Activated T-helper 1 cell treated with anti-CD3 and anti-CD28 coated beads, Interleukin-12 subunit alpha, Interleukin-12 subunit beta, Interleukin-2, Interleukin-4 antibody, amounts not matched to agents 30 ng/mL and 10 ng/mL and 1 ng/mL, durations not matched to agents 14 hours and 24 hours and 36 hours (primary cell): ENCODE measurements at regions of chr5 and their contacts with region 1.

Region 1: DNA sequence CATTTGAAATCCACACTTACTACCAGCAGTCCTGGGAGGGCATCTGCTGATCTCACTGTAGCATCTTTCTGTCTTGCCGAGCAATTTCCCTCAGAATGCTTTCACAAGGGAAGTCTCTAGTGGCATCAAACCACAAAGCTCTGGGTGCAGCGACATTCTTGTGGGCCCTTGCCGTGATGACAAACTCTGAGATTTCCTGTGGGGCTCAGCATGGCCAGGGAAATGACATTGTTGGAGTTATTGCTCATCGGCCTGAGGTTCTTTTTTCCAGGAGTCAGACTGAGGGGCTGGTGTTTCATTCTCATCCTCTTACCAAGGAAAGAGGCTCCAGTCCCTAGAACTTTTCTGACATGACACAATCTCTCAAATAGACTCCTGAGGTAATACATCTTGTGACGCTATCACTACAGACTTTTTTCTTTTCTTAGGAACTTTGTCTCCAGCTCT is 51.4 kb downstream of the PFDN1 start:
- DNase-seq: peak; percentile 69
- H3K4me3 Mint-ChIP-seq: peak overlapping the region; percentile 66
- H3K27ac Mint-ChIP-seq: peak overlapping the region; percentile 78
- H3K4me1 Mint-ChIP-seq: peaks cover 58% of the 10 kb centered on the region
- H3K27me3 Mint-ChIP-seq: no peaks in the 10 kb centered on the region

Region 2: DNA sequence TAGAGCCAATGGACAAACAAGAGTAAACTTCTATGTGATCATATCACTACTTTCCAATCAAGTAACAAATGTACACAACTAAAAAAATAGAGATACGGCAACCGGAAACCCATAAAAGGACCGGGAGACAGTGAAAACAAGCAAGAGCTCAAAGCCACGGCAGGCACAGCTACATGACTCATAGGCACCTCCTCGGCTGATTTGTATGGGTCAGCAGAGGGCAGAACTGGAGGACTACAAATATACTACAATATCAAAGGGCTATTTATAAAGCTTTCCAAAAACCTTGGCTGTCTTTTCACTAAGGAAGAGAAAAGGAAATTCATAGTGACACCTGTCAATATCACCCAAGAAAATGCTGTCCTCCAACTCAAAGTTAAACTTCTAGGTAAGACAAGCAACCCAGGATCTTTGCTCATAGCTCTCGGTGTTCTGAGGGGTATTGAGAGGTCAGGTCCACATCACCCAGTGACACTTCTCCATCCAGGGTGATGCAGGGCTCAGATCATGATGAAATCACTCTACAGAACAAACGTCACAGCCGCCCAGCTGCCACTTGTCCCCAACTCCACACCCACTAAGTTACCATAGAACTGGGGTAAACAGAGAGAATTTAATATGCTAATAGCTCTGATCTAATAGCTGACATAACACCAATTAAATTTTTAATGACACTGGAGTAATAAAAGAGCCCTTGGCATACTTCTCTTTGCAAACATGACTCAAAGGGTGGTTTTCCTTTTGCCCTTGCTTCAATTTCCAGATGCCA is 10.0 kb after region 1 on chr5:
- intact Hi-C with region 1: loop called (anchors 1 kb)
- DNase-seq: no peak
- H3K4me3 Mint-ChIP-seq: no peak overlapping the region
- H3K27ac Mint-ChIP-seq: no peak overlapping the region
- H3K4me1 Mint-ChIP-seq: peaks cover 40% of the 10 kb centered on the region
- H3K27me3 Mint-ChIP-seq: no peaks in the 10 kb centered on the region

Region 3: DNA sequence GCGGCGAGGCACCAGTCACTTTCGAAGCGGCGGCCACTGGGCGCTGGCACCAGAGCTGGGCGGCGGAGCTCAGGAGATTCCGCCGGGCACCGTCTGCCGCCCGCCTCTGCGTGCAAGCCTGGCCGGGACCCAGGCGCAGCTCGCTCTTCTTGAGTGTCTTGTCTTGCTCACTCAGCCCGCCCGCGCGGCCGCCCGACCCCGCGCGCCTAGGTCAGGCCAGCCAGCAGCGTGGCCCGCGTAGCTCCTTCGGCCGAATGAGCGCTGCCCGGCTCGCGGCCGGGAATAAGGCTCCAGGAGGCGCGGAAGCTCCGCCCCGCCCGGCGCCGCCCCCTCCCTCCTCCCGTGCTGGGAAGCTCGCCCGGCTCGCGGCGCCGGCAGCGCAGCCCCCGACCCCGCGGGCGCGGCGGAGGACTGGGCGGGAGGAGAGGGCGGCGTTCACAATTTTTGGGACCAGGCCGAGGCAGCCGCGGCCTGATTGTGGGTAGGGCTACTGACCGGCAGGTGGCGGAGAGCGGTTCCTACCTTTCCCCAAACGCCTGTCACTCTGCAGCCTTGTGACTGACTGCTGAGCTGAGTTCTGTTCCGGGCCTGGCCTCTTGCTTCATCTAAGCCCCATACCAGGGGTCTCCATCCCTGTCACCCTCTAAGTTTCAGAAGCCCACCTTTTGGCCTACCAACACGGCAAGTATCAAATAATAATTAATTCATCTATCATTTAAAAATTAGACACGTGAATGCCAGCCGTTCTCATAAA is 95.0 kb after region 1 on chr5 and contains the start of gene HBEGF:
- intact Hi-C with region 1: loop called (anchors 1 kb)
- DNase-seq: peak; percentile 55
- H3K4me3 Mint-ChIP-seq: peak within 1 kb of the TSS; percentile 87
- H3K27ac Mint-ChIP-seq: peak within 1 kb of the TSS; percentile 99
- H3K4me1 Mint-ChIP-seq: peaks cover 77% of the 10 kb centered on the region
- H3K27me3 Mint-ChIP-seq: peaks cover 1% of the 10 kb centered on the region
- total RNA-seq, gene HBEGF: 28.5 and 28.9 TPM in 2 replicates

Region 4: DNA sequence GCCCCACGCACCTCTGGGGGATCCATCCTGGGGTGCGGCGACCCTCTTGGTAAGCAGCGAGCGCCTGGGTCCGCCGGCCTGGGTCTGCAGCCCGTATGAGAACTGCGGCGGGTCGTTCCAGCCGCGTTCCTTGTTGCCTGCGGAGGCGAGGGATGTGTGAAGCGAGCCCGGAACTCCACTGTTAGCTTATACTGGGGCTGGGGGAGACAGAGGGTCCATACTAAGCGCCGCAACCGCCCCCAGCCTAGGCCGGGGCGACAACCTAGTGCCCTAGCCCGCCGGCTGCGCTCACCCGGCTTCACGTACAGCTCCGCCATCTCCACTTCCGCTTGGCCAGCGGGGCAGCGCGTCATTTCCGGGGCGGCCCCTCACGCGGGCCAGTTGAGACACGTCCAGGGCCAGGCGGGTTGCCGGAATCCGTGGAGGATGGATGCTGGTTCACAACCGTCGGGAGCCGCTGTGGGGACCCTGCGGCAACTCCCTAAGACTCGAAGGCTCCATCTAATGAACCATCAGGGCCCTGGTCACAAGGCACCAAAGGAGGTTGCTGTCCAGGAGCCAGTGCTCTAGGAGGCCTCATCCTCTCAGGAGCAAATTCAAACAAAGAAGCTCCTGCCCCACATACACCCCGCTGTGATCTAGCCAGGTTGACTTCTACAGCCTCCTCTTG is 305.7 kb after region 1 on chr5 and contains the start of gene SRA1:
- intact Hi-C with region 1: loop called (anchors 10 kb)
- DNase-seq: peak; percentile 90
- H3K4me3 Mint-ChIP-seq: peak within 1 kb of the TSS; percentile 88
- H3K27ac Mint-ChIP-seq: peak within 1 kb of the TSS; percentile 89
- H3K4me1 Mint-ChIP-seq: peaks cover 47% of the 10 kb centered on the region
- H3K27me3 Mint-ChIP-seq: no peaks in the 10 kb centered on the region
- total RNA-seq, gene SRA1: 55.6 and 59.2 TPM in 2 replicates